Ascending aorta (tissue), 2 donors: ENCODE measurements at regions of chr6 and their contacts with region 1.

Region 1: GRCh38 chr6:117482240-117483003 is at the start of gene DCBLD1:
- DNase-seq: peak; percentile 16 to 89
- H3K4me3 ChIP-seq: peak within 1 kb of the TSS; percentile 70 to 83
- H3K27ac ChIP-seq: peak within 1 kb of the TSS; percentile 87 to 91
- H3K4me1 ChIP-seq: peaks cover 4 to 7% of the 10 kb centered on the region in 2 donors
- H3K27me3 ChIP-seq: no peaks in the 10 kb centered on the region
- CTCF ChIP-seq: peak in 2 of 3 experiments; percentile 13 to 20
- total RNA-seq, gene DCBLD1: 0.85 TPM

Region 2: GRCh38 chr6:117449549-117450439 is 32.6 kb before region 1 on chr6:
- intact Hi-C with region 1: loop called (anchors 2 kb)
- DNase-seq: peak in 1 of 2 donors; percentile 76
- H3K4me3 ChIP-seq: peak overlapping the region in 1 of 2 donors; percentile 3
- H3K27ac ChIP-seq: peak overlapping the region; percentile 56 to 63
- H3K4me1 ChIP-seq: peaks cover 0 to 13% of the 10 kb centered on the region in 2 donors
- H3K27me3 ChIP-seq: no peaks in the 10 kb centered on the region
- CTCF ChIP-seq: peak; percentile 53 to 81 (median 76)

Region 3: GRCh38 chr6:117498159-117498558 is 15.7 kb after region 1 on chr6:
- intact Hi-C with region 1: no loop called
- DNase-seq: no peak
- H3K4me3 ChIP-seq: no peak overlapping the region
- H3K27ac ChIP-seq: peak overlapping the region; percentile 5 to 10
- H3K4me1 ChIP-seq: peaks cover 0 to 17% of the 10 kb centered on the region in 2 donors
- H3K27me3 ChIP-seq: no peaks in the 10 kb centered on the region
- CTCF ChIP-seq: no peak

Region 4: DNA sequence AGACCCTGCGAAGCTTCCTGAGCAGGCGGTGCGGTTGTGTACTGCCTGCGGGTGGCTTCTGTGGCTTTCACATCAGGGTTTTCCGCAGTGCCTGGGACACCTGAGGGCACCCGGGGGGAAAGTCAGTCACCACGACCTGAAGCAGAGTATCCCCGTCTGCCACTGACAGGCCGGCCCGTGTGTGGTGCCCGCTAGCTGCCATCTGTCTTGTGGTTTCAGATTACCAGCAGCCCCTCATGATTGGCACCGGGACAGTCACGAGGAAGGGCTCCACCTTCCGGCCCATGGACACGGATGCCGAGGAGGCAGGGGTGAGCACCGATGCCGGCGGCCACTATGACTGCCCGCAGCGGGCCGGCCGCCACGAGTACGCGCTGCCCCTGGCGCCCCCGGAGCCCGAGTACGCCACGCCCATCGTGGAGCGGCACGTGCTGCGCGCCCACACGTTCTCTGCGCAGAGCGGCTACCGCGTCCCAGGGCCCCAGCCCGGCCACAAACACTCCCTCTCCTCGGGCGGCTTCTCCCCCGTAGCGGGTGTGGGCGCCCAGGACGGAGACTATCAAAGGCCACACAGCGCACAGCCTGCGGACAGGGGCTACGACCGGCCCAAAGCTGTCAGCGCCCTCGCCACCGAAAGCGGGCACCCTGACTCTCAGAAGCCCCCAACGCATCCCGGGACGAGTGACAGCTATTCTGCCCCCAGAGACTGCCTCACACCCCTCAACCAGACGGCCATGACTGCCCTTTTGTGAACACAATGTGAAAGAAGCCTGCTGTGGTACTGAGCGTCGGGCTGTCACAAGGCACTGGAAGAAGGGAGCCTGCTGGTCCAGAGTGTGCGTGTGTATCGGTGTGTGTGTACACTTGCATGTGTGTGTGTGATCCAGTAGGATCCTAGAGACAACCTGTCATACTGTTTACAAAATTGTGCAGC is 65.5 kb after region 1 on chr6:
- intact Hi-C with region 1: loop called (anchors 1 kb)
- DNase-seq: peak; percentile 39 to 86
- H3K4me3 ChIP-seq: peak overlapping the region; percentile 50 to 66
- H3K27ac ChIP-seq: peak overlapping the region; percentile 75 to 85
- H3K4me1 ChIP-seq: peaks cover 2 to 12% of the 10 kb centered on the region in 2 donors
- H3K27me3 ChIP-seq: no peaks in the 10 kb centered on the region
- CTCF ChIP-seq: peak in 2 of 3 experiments; percentile 26

Region 5: DNA sequence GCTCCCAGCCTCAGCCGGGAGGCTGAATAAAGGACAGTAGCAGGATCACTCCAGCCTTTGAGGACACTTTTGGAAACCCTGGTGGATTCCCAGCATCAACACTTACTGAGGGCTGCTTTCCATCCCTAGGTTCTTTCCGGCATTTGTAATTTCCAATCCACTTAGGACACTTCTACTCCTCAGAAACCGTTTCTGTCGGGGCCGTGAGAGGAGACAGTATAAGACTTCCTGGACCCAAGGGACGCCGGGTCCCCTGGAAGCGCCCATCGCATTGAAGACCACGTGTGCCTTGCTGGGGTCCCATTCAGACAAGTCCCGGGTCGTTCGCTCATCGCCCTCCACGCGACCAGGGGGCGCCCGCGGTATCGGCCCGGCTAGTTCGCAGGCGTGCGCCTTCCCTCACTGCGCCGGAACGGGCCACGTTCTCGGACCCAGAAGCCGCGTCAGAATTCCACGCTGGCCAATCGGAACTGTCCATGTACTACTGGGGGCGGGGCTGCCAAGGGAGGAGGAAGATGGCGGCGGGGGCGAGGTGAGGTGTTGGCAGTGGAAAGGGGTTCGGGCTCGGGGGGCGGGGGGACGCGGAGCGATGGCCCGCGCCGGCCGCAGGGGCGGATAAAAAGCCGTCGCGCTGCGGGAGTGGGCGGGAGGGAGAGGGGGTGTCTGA is 192.7 kb after region 1 on chr6 and contains the start of gene NUS1:
- intact Hi-C with region 1: loop called (anchors 5 kb)
- DNase-seq: peak; percentile 89 to 99
- H3K4me3 ChIP-seq: peak within 1 kb of the TSS; percentile 81 to 92
- H3K27ac ChIP-seq: peak within 1 kb of the TSS; percentile 79 to 82
- H3K4me1 ChIP-seq: peaks cover 0 to 9% of the 10 kb centered on the region in 2 donors
- H3K27me3 ChIP-seq: no peaks in the 10 kb centered on the region
- CTCF ChIP-seq: peak; percentile 59 to 89 (median 84)
- total RNA-seq, gene NUS1: 14.6 TPM

Region 6: GRCh38 chr6:118551063-118552053 is 1068.9 kb after region 1 on chr6:
- intact Hi-C with region 1: loop called (anchors 5 kb)
- DNase-seq: no peak
- H3K4me3 ChIP-seq: peak overlapping the region; percentile 53 to 69
- H3K27ac ChIP-seq: peak overlapping the region; percentile 83 to 89
- H3K4me1 ChIP-seq: no peaks in the 10 kb centered on the region
- H3K27me3 ChIP-seq: no peaks in the 10 kb centered on the region
- CTCF ChIP-seq: peak; percentile 57 to 69 (median 64)